CD8-positive, alpha-beta T cell (primary cell): ENCODE measurements at regions of chr1 and their contacts with region 1.

Region 1: DNA sequence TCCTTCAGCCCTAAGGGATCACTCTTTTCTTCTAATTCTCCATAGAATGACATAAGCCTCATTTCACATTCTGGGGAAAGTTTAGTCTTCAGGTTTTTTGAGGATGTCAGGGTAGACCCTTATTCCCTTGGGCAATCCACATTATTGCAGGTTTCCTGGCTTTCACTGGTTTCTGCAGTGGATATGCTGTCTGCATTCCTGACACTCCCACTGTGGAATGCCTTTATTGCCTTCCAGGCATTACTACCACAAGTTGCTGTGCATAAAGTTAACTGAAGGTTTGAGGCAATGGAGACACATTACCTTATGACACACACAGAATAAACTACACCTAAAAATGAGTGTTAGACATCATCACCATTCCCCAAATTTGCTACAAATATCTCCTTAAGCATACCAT is 12.7 kb downstream of the FASLG start:
- DNase-seq: no peak
- ATAC-seq: no peak
- H3K4me3 ChIP-seq: no peak overlapping the region
- H3K4me3 Mint-ChIP-seq: no peak overlapping the region
- H3K27ac ChIP-seq: peak overlapping the region in 1 of 2 experiments; percentile 62
- H3K27ac Mint-ChIP-seq: no peak overlapping the region
- H3K4me1 ChIP-seq: peaks cover 54% of the 10 kb centered on the region
- H3K4me1 Mint-ChIP-seq: peaks cover 64% of the 10 kb centered on the region
- H3K27me3 ChIP-seq: no peaks in the 10 kb centered on the region
- H3K27me3 Mint-ChIP-seq: peaks cover 49% of the 10 kb centered on the region
- CTCF ChIP-seq: no peak

Region 2: DNA sequence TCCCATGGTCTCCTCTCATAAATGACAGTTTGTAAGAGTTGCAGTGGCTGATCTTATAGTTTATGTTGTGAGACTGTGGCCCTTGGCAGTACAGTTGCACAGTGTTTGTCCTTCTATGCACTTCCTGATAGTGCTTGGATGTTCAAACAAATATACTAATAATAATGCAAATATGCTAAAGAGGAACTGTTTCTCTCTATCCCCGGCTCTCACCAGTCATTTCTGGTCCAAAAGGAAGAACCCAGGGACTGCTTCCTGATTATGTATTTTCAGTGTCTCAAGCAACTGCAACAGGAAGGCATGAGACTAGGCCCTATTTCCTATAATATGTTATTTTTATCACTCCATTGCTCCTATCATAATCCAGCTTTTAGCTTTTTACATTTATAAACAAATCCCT is 155.7 kb before region 1 on chr1:
- CTCF ChIA-PET with region 1: no interaction called
- POLR2A ChIA-PET with region 1: no interaction called
- intact Hi-C with region 1: no loop called
- DNase-seq: no peak
- ATAC-seq: no peak
- H3K4me3 ChIP-seq: no peak overlapping the region
- H3K4me3 Mint-ChIP-seq: no peak overlapping the region
- H3K27ac ChIP-seq: no peak overlapping the region
- H3K27ac Mint-ChIP-seq: no peak overlapping the region
- H3K4me1 ChIP-seq: no peaks in the 10 kb centered on the region
- H3K4me1 Mint-ChIP-seq: no peaks in the 10 kb centered on the region
- H3K27me3 ChIP-seq: no peaks in the 10 kb centered on the region
- H3K27me3 Mint-ChIP-seq: no peaks in the 10 kb centered on the region
- CTCF ChIP-seq: no peak

Region 3: DNA sequence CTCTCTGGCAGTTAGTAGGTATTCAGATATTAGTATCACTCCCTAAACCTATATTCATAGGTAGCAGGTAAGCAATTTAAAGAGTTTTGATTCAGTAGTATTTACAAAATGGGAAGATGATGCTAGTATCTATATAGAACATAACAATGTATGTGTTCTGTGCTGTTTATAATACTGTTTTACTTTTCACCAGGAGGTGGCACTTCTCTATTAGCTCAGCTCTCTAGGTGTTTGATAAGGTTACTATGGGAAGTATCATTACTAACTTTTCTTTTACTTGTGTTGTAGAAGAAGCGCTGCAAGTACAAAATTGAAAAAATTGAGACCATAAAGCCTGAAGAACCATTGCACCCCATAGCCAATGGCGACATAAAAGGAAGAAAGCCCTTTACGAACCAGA is 62.1 kb before region 1 on chr1:
- CTCF ChIA-PET with region 1: interaction called, 4 read pairs
- POLR2A ChIA-PET with region 1: interaction called, 4 read pairs
- intact Hi-C with region 1: loop called in 1 of 2 experiments (anchors 2 kb)
- DNase-seq: peak in 2 of 9 experiments; percentile 53 to 62
- ATAC-seq: peak; percentile 78
- H3K4me3 ChIP-seq: no peak overlapping the region
- H3K4me3 Mint-ChIP-seq: no peak overlapping the region
- H3K27ac ChIP-seq: no peak overlapping the region
- H3K27ac Mint-ChIP-seq: no peak overlapping the region
- H3K4me1 ChIP-seq: no peaks in the 10 kb centered on the region
- H3K4me1 Mint-ChIP-seq: peaks cover 4% of the 10 kb centered on the region
- H3K27me3 ChIP-seq: no peaks in the 10 kb centered on the region
- H3K27me3 Mint-ChIP-seq: no peaks in the 10 kb centered on the region
- CTCF ChIP-seq: peak; percentile 74